ENCODE measurements at regions of chr17 and their contacts with region 1.

Region 1: DNA sequence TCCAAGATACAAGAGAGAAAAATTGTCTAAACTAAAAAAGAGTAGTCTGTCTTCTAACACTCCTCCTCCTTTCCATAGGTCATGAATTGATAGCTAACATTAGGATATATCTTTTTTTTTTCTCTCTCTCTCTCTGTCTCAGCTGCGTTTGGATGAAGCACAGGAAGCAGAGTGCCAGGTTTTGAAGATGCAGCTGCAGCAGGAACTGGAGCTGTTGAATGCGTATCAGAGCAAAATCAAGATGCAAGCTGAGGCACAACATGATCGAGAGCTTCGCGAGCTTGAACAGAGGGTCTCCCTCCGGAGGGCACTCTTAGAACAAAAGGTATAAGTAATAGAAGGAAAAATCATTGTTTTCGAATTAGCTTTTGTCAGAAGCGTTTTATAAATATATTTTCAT is 32.9 kb downstream of the ABHD15 start:
- DNase-seq: no peak
- ATAC-seq: no peak
- H3K4me3 ChIP-seq: no peak overlapping the region
- H3K27ac ChIP-seq: no peak overlapping the region
- H3K4me1 ChIP-seq: no peaks in the 10 kb centered on the region
- H3K27me3 ChIP-seq: no peaks in the 10 kb centered on the region
- CTCF ChIP-seq: no peak

Region 2: DNA sequence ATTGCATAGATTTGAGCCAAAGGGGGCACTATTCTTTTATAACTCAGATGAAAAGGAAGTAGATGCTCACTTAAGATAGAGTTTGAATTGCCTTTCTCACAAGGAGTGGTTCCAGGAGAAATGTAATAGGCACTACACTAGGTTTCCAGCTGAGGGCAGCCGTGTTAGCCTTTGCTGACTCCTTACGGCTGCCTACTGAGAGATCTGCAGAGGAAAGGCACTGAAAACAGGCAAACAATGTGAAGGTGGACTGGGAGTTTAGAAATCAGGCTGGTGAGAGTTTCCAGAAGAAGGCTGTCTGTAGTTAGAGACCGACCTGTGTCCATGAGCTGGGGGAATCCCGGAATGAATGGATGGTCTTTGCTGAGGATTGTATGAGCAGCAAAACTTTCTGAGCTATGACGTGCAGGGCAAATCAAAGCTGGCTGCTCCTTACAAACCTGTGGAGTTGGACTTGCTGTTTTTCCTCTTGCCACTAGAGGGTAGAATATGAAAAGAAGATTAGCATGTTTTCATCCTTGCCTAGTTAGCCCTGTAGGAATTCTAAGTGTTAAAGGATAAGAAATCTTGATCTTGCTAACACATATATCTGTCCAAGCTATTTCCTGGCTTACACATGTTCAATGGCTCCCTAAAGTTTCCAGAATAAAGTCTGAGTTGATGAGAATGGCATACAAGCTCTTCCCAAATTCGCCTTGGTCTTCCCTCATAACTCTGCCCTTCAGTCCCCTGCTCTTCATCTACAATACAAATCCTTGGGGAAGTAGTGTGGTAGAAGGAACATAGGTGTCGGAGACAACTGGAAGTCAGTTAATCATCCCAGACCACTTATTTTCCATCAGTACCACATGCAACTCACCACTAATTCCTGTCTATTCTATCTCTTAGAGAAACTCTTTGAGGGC is 163.9 kb before region 1 on chr17:
- intact Hi-C with region 1: loop called in 1 of 2 experiments (anchors 5 kb)
- DNase-seq: peak in 3 of 4 donors; percentile 38 to 82 (median 78)
- ATAC-seq: peak; percentile 97
- H3K4me3 ChIP-seq: no peak overlapping the region
- H3K27ac ChIP-seq: peak overlapping the region; percentile 38 to 49
- H3K4me1 ChIP-seq: no peaks in the 10 kb centered on the region
- H3K27me3 ChIP-seq: no peaks in the 10 kb centered on the region
- CTCF ChIP-seq: peak; percentile 63 to 84

Region 3: DNA sequence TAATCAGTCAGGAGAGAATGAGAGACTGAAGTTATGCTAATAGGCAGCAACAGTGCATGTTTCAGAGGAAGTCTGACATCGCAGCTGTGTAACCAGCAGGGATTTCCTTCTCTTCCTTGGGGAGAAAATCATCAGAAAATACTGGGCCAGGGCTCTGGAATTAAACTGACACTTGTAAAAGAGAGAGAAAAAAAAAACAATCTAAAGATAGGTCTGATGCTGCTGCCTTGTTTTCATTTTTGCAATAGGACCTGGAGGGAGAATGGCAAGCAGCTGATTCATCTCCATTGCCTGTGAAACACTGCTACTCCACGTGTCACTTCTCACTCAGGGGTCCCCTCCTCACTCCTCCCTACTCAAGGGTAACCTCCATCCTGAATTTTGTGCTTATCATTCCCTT is 106.4 kb after region 1 on chr17:
- intact Hi-C with region 1: no loop called
- DNase-seq: no peak
- ATAC-seq: no peak
- H3K4me3 ChIP-seq: no peak overlapping the region
- H3K27ac ChIP-seq: peak overlapping the region; percentile 47 to 72
- H3K4me1 ChIP-seq: peaks cover 24 to 66% of the 10 kb centered on the region in 2 donors
- H3K27me3 ChIP-seq: no peaks in the 10 kb centered on the region
- CTCF ChIP-seq: no peak

Region 4: GRCh38 chr17:29732613-29733012 is 198.6 kb after region 1 on chr17:
- intact Hi-C with region 1: no loop called
- DNase-seq: no peak
- ATAC-seq: peak; percentile 68
- H3K4me3 ChIP-seq: no peak overlapping the region
- H3K27ac ChIP-seq: peak overlapping the region in 1 of 2 donors; percentile 45
- H3K4me1 ChIP-seq: peaks cover 0 to 55% of the 10 kb centered on the region in 2 donors
- H3K27me3 ChIP-seq: no peaks in the 10 kb centered on the region
- CTCF ChIP-seq: no peak